A673 (cell line): ENCODE measurements at regions of chr14 and their contacts with region 1.

Region 1: DNA sequence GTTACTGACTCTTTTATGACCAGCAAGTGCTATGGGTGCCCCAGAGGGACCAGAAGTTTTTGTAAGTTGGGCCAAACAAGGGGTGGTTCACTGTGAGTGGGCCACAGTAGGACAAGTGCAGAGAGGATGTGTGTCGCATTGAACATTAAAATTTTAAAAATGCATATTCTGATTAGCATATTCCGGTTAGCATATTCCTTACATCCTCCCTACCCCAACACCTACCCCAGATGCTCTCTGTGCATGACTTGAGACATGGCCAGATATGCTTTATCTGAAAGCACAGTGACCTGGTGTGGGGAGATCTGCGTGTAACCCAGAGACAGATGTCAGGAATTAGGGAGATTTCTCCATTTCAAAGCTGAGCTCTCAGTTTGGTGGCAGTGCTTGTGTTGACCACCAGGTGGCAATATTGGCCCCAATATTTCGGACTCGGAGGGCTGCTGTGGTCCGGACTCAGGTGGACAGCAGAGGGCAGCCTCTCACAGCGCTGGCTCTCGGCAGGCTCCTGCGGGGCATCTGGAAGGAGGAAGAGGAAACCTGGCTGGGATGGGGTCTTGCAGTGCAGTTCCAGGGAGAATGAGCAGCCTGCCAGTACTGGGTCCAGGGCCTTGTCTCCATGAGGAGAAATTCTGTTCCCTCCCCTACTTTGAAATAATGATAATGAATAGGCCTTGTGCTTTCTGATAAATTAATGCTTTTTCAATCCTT is 1.6 kb upstream of the CEBPE start:
- DNase-seq: peak; percentile 92
- H3K4me3 ChIP-seq: no peak overlapping the region
- H3K27ac ChIP-seq: no peak overlapping the region
- H3K4me1 ChIP-seq: peaks cover 29% of the 10 kb centered on the region
- H3K27me3 ChIP-seq: no peaks in the 10 kb centered on the region
- CTCF ChIP-seq: peak; percentile 100

Region 2: DNA sequence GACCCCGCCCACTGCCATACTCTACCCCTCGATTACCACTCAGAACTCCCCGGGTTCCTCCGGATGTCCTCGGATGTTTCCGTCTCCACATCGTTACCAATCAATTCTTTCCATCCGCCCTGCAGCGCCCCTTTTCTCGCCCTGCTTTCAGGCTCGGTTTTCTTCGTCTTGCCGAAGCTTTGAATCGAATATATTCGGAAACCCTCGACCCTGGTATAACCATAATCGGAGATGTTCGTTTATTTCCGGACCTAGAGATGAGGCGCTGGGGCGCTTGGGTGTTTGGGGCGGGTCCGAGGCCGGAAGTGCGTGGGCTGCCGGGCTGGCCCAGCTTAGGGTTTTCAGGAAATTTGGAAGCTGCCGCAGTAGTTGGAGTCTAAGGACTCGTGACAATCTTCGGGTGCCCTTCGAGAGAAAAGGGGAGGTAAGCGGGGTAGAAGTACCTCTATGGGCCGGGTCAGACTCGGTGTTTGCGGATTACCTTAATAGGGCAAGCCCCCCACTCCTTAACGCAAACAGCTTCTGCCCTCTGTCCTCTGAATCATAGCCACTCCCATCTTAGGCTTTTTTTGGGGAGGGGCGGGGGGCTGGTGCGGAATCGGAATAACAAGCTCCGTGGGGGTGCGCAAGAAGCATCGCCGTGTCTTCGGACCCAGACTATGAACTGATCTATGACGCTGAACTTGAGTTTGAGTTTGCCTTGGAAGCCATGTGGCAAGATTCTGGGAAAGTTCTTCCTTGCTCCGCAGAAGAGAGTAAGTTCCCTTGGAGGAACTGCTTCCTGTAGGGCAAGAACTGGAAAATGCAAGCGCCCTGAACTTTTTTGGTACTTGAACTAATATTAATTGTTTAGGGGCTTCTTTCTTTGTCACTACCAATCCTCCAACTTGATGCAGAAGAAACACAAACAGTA is 25.2 kb before region 1 on chr14 and contains the start of gene C14orf119:
- CTCF ChIA-PET with region 1: interaction called, 10 read pairs
- POLR2A ChIA-PET with region 1: no interaction called
- intact Hi-C with region 1: no loop called
- DNase-seq: peak; percentile 100
- H3K4me3 ChIP-seq: peak within 1 kb of the TSS; percentile 64
- H3K27ac ChIP-seq: peak within 1 kb of the TSS; percentile 94
- H3K4me1 ChIP-seq: peaks cover 28% of the 10 kb centered on the region
- H3K27me3 ChIP-seq: no peaks in the 10 kb centered on the region
- CTCF ChIP-seq: no peak
- total RNA-seq, gene C14orf119: 50.3 and 54.5 TPM in 2 replicates

Region 3: GRCh38 chr14:23151342-23151741 is 30.6 kb after region 1 on chr14:
- CTCF ChIA-PET with region 1: interaction called, 14 read pairs
- POLR2A ChIA-PET with region 1: no interaction called
- intact Hi-C with region 1: no loop called
- DNase-seq: no peak
- H3K4me3 ChIP-seq: no peak overlapping the region
- H3K27ac ChIP-seq: no peak overlapping the region
- H3K4me1 ChIP-seq: peaks cover 33% of the 10 kb centered on the region
- H3K27me3 ChIP-seq: no peaks in the 10 kb centered on the region
- CTCF ChIP-seq: no peak

Region 4: DNA sequence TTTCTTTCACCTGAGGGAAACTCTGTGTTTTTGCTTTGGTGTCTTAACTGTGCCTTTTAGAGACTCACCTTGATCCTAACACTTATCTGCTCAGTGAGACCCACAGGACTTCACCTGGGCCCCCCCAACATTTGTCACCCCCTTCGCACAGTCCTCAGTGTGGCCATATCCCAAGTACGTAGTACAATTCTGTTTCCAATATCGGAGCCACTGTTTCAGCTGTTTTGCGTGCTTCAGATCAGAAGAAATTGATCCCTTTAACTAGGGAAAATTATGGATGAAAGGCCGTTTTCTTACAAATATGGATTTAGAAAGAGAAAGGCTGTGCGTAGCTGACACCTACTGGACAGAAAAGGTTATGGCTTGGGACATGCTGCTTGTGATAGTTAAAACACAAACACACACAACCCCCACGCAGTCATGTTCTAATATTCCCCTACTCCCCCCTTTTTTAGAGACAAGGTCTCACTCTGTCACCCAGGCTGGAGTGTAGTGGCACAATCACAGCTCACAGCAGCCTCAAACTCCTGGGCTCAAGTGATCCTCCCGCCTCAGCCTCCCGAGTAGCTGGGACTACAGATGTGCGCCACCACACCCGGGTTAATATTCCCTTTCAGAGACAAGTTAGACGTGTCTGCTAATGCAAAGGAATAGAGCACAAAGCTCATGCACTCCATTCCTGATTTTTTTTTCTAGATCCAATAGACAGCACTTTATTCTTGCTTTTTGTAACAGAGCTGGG is 66.4 kb after region 1 on chr14:
- CTCF ChIA-PET with region 1: interaction called, 90 read pairs
- POLR2A ChIA-PET with region 1: interaction called, 11 read pairs
- intact Hi-C with region 1: loop called (anchors 1 kb)
- DNase-seq: peak; percentile 76
- H3K4me3 ChIP-seq: no peak overlapping the region
- H3K27ac ChIP-seq: no peak overlapping the region
- H3K4me1 ChIP-seq: peaks cover 3% of the 10 kb centered on the region
- H3K27me3 ChIP-seq: no peaks in the 10 kb centered on the region
- CTCF ChIP-seq: peak; percentile 79

Region 5: GRCh38 chr14:23751616-23752015 is 630.9 kb after region 1 on chr14:
- CTCF ChIA-PET with region 1: no interaction called
- POLR2A ChIA-PET with region 1: no interaction called
- intact Hi-C with region 1: no loop called
- DNase-seq: no peak
- H3K4me3 ChIP-seq: no peak overlapping the region
- H3K27ac ChIP-seq: no peak overlapping the region
- H3K4me1 ChIP-seq: no peaks in the 10 kb centered on the region
- H3K27me3 ChIP-seq: peaks cover 59% of the 10 kb centered on the region
- CTCF ChIP-seq: no peak